HCT116 (cell line): ENCODE measurements at regions of chr1 and their contacts with region 1.

Region 1: GRCh38 chr1:35769759-35770446 is at the start of gene CLSPN:
- DNase-seq: peak; percentile 91
- ATAC-seq: peak; percentile 94
- H3K4me3 ChIP-seq: peak within 1 kb of the TSS; percentile 70 to 89
- H3K27ac ChIP-seq: peak within 1 kb of the TSS; percentile 79
- H3K4me1 ChIP-seq: peaks cover 0 to 17% of the 10 kb centered on the region in 2 experiments; a peak in 3 of 4 replicates
- H3K27me3 ChIP-seq: no peaks in the 10 kb centered on the region
- CTCF ChIP-seq: no peak
- POLR2A ChIP-seq: peak; percentile 66
- RAD21 ChIP-seq: no peak
- total RNA-seq, gene CLSPN: 35.2 TPM

Region 2: DNA sequence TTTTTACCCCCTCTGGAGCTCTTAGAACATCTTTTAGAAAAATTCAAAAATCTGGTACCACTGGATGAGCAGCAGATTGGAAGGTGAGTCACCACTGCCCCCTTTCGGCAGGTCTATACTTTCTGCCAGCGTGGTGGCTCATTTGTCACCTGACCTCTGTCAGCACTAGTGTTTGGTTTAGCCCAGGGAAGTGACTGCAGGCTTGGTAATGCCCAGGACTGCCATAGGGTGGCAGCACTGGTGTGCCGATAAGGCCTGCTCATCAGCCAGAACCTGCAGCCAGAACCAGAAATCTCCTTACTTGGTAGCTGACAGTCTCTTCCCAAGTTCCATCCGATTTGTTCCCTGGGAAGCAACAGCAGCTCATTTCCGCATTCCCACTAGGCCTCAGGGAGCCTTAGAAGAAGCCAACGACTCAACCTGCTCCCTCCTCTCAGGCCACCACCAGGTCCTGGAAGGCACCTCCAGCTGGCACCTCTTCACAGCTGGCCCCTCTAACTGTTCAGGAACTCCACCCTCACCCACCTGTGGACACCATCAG is 917.2 kb before region 1 on chr1:
- CTCF ChIA-PET with region 1: interaction called, 3 read pairs
- POLR2A ChIA-PET with region 1: interaction called, 3 read pairs
- RAD21 ChIA-PET with region 1: no interaction called
- intact Hi-C with region 1: loop called (anchors 10 kb)
- DNase-seq: peak; percentile 90
- ATAC-seq: peak; percentile 99
- H3K4me3 ChIP-seq: no peak overlapping the region
- H3K27ac ChIP-seq: peak overlapping the region; percentile 8; the same call in 1 of the 2 replicates
- H3K4me1 ChIP-seq: peaks cover 0 to 3% of the 10 kb centered on the region in 2 experiments; a peak in 1 of 4 replicates
- H3K27me3 ChIP-seq: no peaks in the 10 kb centered on the region
- CTCF ChIP-seq: peak; percentile 98 to 99 (median 98)
- POLR2A ChIP-seq: no peak
- RAD21 ChIP-seq: peak; percentile 91

Region 3: GRCh38 chr1:35451125-35451528 is 318.8 kb before region 1 on chr1:
- CTCF ChIA-PET with region 1: interaction called, 5 read pairs
- POLR2A ChIA-PET with region 1: no interaction called
- RAD21 ChIA-PET with region 1: no interaction called
- intact Hi-C with region 1: loop called (anchors 1 kb)
- DNase-seq: peak; percentile 29
- ATAC-seq: peak; percentile 99
- H3K4me3 ChIP-seq: no peak overlapping the region
- H3K27ac ChIP-seq: no peak overlapping the region
- H3K4me1 ChIP-seq: no peaks in the 10 kb centered on the region
- H3K27me3 ChIP-seq: no peaks in the 10 kb centered on the region
- CTCF ChIP-seq: peak; percentile 79 to 87 (median 86)
- POLR2A ChIP-seq: no peak
- RAD21 ChIP-seq: peak; percentile 84

Region 4: GRCh38 chr1:35641233-35641866 is 128.6 kb before region 1 on chr1 and contains the start of gene PSMB2:
- CTCF ChIA-PET with region 1: no interaction called
- POLR2A ChIA-PET with region 1: no interaction called
- RAD21 ChIA-PET with region 1: no interaction called
- intact Hi-C with region 1: loop called (anchors 5 kb)
- DNase-seq: peak; percentile 94
- ATAC-seq: peak; percentile 85
- H3K4me3 ChIP-seq: peak within 1 kb of the TSS; percentile 68 to 90
- H3K27ac ChIP-seq: peak within 1 kb of the TSS; percentile 89
- H3K4me1 ChIP-seq: peaks cover 3 to 31% of the 10 kb centered on the region in 2 experiments; a peak in 3 of 4 replicates
- H3K27me3 ChIP-seq: peaks cover 5% of the 10 kb centered on the region; the same call in 1 of the 2 replicates
- CTCF ChIP-seq: no peak
- POLR2A ChIP-seq: peak; percentile 96
- RAD21 ChIP-seq: no peak
- total RNA-seq, gene PSMB2: 122 TPM

Region 5: GRCh38 chr1:35726450-35727433 is 43.2 kb before region 1 on chr1:
- CTCF ChIA-PET with region 1: interaction called, 6 read pairs
- POLR2A ChIA-PET with region 1: no interaction called
- RAD21 ChIA-PET with region 1: no interaction called
- intact Hi-C with region 1: loop called (anchors 2 kb)
- DNase-seq: peak; percentile 24
- ATAC-seq: peak; percentile 95
- H3K4me3 ChIP-seq: no peak overlapping the region
- H3K27ac ChIP-seq: no peak overlapping the region
- H3K4me1 ChIP-seq: no peaks in the 10 kb centered on the region
- H3K27me3 ChIP-seq: no peaks in the 10 kb centered on the region
- CTCF ChIP-seq: peak; percentile 78 to 88 (median 83); a peak in 5 of 6 replicates
- POLR2A ChIP-seq: no peak
- RAD21 ChIP-seq: peak; percentile 88

Region 6: DNA sequence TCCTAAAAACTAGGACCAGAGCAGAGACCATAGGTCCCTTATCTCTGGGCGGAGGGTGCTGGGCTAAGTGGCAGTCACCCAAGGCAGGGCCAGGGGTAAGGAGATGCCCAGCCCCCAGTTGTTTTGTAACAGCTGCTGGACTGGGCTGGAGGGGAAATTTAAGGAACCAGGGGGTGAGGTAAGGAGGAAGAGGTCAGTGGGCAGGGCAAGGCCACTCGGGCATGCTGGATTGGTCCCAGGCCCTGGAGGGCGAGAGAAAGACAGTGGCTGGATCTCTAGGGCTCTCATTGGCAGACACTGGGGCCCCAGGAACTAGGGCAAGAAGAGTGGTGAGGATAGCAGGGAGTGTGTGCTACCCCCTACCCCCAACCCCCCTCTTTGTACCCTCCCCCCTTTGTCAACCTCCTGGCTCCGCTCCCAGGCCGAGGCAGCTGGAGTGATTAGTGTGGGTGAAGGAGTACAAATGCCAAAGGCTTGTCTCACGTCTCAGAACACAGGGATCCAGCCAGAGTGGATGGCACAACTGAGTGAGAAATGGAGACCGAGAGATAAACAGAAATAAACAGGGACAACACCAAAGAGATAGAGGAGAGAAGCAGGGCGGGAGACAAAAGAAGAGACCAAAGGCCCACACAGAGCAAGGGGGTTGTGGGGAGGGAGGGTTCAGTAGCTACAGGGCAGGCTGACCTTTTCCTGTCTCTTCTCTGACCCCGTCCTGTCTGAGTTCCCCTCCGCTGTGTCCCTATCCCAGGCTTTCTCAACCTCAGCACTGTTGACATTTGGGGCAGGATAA is 433.8 kb after region 1 on chr1:
- CTCF ChIA-PET with region 1: no interaction called
- POLR2A ChIA-PET with region 1: no interaction called
- RAD21 ChIA-PET with region 1: no interaction called
- intact Hi-C with region 1: no loop called
- DNase-seq: no peak
- ATAC-seq: no peak
- H3K4me3 ChIP-seq: no peak overlapping the region
- H3K27ac ChIP-seq: no peak overlapping the region
- H3K4me1 ChIP-seq: peaks cover 0 to 8% of the 10 kb centered on the region in 2 experiments; a peak in 1 of 4 replicates
- H3K27me3 ChIP-seq: no peaks in the 10 kb centered on the region
- CTCF ChIP-seq: no peak
- POLR2A ChIP-seq: no peak
- RAD21 ChIP-seq: no peak